Transverse colon (tissue), 4 donors: ENCODE measurements at regions of chr7 and their contacts with region 1.

Region 1: DNA sequence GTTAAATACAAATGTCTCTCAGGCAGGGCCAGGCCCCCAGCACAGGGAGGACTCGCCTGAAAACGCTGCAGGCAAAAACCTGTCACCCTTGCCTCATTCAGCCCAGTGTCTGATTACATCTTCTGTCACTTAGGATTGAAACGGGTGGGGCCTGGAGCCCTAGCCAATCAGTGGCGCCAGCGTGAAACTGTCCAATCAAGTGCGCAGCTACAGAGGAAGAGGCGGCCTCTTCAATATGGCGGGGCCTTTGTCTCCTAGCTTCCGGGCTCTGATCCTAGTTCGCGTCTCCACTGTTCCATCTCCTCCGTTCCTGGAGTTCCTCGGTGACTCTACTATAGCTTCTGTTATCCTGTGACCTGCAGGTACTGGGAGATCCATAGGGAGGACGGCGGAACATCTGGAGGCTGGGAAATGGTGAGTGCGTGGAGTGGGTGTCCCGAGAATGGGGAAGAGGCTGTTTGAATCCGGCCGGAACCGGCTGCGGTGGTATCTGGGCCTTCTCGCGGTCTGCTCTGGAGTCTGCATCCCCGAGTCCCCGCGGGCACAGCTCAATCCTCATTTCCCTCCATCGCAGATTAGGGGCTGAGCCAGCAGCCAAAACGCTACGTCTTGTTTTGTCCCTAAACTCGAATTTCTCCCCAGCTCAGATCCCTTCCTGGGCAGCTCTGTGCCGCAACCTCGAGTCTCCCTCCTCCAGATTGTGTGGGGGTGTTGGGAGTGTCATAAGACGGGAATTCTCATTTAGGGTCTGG is at the start of gene ZNF736:
- DNase-seq: peak; percentile 91
- H3K4me3 ChIP-seq: peak within 1 kb of the TSS; percentile 47 to 84 (median 58)
- H3K27ac ChIP-seq: peak within 1 kb of the TSS; percentile 57 to 81 (median 67)
- H3K4me1 ChIP-seq: peaks cover 8 to 22% (median 10%) of the 10 kb centered on the region in 4 donors
- H3K27me3 ChIP-seq: no peaks in the 10 kb centered on the region
- CTCF ChIP-seq: no peak
- EP300 ChIP-seq: no peak
- POLR2A ChIP-seq: peak; percentile 75
- total RNA-seq, gene ZNF736: 7.0 to 12.7 (median 9.2) TPM

Region 2: GRCh38 chr7:64562626-64563275 is 248.8 kb after region 1 on chr7 and contains the start of gene ZNF680:
- in situ Hi-C with region 1: loop called in 2 of 4 experiments (anchors 25 kb)
- intact Hi-C with region 1: no loop called
- DNase-seq: peak; percentile 95
- H3K4me3 ChIP-seq: peak within 1 kb of the TSS; percentile 71 to 86 (median 76)
- H3K27ac ChIP-seq: peak within 1 kb of the TSS; percentile 82 to 87 (median 84)
- H3K4me1 ChIP-seq: peaks cover 0 to 29% (median 9%) of the 10 kb centered on the region in 4 donors
- H3K27me3 ChIP-seq: no peaks in the 10 kb centered on the region
- CTCF ChIP-seq: no peak
- EP300 ChIP-seq: no peak
- POLR2A ChIP-seq: peak; percentile 64
- total RNA-seq, gene ZNF680: 3.4 to 11.1 (median 6.6) TPM

Region 3: GRCh38 chr7:64665980-64666662 is 352.2 kb after region 1 on chr7 and contains the start of gene ZNF107:
- in situ Hi-C with region 1: loop called in 1 of 4 experiments (anchors 25 kb)
- intact Hi-C with region 1: no loop called
- DNase-seq: peak; percentile 92
- H3K4me3 ChIP-seq: peak within 1 kb of the TSS; percentile 58 to 92 (median 76)
- H3K27ac ChIP-seq: peak within 1 kb of the TSS; percentile 72 to 84 (median 81)
- H3K4me1 ChIP-seq: peaks cover 4 to 16% (median 6%) of the 10 kb centered on the region in 4 donors
- H3K27me3 ChIP-seq: no peaks in the 10 kb centered on the region
- CTCF ChIP-seq: no peak
- EP300 ChIP-seq: no peak
- POLR2A ChIP-seq: peak; percentile 50
- total RNA-seq, gene ZNF107: 3.8 to 11.2 (median 8.4) TPM